ENCODE measurements at regions of chr20 and their contacts with region 1.

Region 1: DNA sequence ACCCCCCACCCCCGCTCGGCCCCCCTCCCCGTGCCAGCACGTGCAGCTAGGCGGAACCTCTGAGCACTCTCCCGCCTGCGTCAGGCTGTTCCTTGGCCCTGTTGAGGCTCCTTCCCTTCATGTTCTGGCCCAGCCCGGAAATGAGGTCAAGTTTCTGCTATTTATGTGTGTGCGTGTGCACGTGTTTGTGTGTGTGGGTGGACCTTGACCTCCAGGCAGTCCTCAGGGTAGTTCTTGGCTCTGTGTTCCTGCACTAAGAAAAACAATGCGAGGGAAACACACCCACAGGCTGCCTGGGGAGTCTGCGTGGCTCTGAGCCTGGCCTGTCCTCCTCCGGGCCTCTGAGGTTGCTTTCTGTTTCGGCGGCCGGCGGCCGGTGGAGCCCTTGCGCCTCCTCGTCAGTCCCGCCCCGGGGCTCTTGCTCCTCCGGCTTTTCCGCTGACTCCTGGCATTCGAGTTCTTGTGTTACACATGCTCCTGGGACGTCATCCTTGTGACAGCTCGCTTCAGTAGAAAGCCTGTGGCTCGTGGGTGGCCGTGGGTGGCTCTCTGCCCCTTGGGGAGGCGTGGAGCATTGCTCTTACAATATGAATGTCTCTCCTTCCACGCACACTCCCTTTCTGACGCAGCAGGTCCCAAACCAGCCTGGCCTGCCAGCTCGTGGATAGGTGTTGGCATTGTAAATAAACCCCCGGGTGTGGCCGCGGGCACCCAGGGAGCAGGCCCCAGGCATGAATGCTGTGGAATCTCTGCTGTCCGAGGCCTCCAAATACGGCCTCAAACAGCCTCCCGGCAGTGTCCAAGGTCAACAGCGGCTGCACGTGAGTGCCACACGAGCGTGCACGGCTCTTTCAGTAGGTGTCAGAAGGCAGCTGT is 10.0 kb downstream of the SLCO4A1 start:
- DNase-seq: peak; percentile 91 to 96
- H3K4me3 ChIP-seq: peak overlapping the region; percentile 17
- H3K4me3 Mint-ChIP-seq: peak overlapping the region; percentile 65
- H3K27ac Mint-ChIP-seq: peak overlapping the region; percentile 78
- H3K4me1 ChIP-seq: peaks cover 28% of the 10 kb centered on the region
- H3K4me1 Mint-ChIP-seq: peaks cover 28% of the 10 kb centered on the region
- H3K27me3 ChIP-seq: no peaks in the 10 kb centered on the region
- H3K27me3 Mint-ChIP-seq: no peaks in the 10 kb centered on the region
- CTCF ChIP-seq: no peak

Region 2: GRCh38 chr20:62623488-62624324 is 28.6 kb before region 1 on chr20:
- CTCF ChIA-PET with region 1: interaction called, 8 read pairs
- POLR2A ChIA-PET with region 1: no interaction called
- intact Hi-C with region 1: loop called (anchors 1 kb)
- DNase-seq: peak; percentile 97 to 99
- H3K4me3 ChIP-seq: 0 out of 2 replicates have a peak overlapping the region, but pooled peaks have one; percentile 3
- H3K4me3 Mint-ChIP-seq: peak overlapping the region; percentile 61
- H3K27ac Mint-ChIP-seq: peak overlapping the region; percentile 80
- H3K4me1 ChIP-seq: peaks cover 33% of the 10 kb centered on the region
- H3K4me1 Mint-ChIP-seq: peaks cover 23% of the 10 kb centered on the region
- H3K27me3 ChIP-seq: no peaks in the 10 kb centered on the region
- H3K27me3 Mint-ChIP-seq: no peaks in the 10 kb centered on the region
- CTCF ChIP-seq: no peak

Region 3: GRCh38 chr20:62642040-62642665 is 10.1 kb before region 1 on chr20 and contains the start of gene SLCO4A1:
- CTCF ChIA-PET with region 1: interaction called, 10 read pairs
- POLR2A ChIA-PET with region 1: no interaction called
- intact Hi-C with region 1: no loop called
- DNase-seq: peak; percentile 93 to 96
- H3K4me3 ChIP-seq: peak within 1 kb of the TSS; percentile 81
- H3K4me3 Mint-ChIP-seq: peak within 1 kb of the TSS; percentile 81
- H3K27ac Mint-ChIP-seq: no peak within 1 kb of the TSS
- H3K4me1 ChIP-seq: peaks cover 16% of the 10 kb centered on the region
- H3K4me1 Mint-ChIP-seq: no peaks in the 10 kb centered on the region
- H3K27me3 ChIP-seq: no peaks in the 10 kb centered on the region
- H3K27me3 Mint-ChIP-seq: peaks cover 5% of the 10 kb centered on the region
- CTCF ChIP-seq: no peak
- total RNA-seq, gene SLCO4A1: 18.7 and 23.6 TPM in 2 replicates